ENCODE measurements at regions of chr18 and their contacts with region 1.

Region 1: GRCh38 chr18:74196220-74197119 is 48.1 kb downstream of the TIMM21 start:
- DNase-seq: no peak
- ATAC-seq: peak; percentile 75 to 86

Region 2: GRCh38 chr18:74290794-74291471 is 94.5 kb after region 1 on chr18:
- intact Hi-C with region 1: no loop called
- DNase-seq: no peak
- ATAC-seq: peak; percentile 24 to 45

Region 3: GRCh38 chr18:74476140-74476539 is 279.7 kb after region 1 on chr18:
- intact Hi-C with region 1: loop called in 1 of 2 experiments (anchors 5 kb)
- DNase-seq: peak; percentile 43
- ATAC-seq: peak in 1 of 2 donors; percentile 26

Region 4: GRCh38 chr18:74546751-74547550 is 350.5 kb after region 1 on chr18:
- intact Hi-C with region 1: loop called in 1 of 2 experiments (anchors 5 kb)
- DNase-seq: peak; percentile 63
- ATAC-seq: peak; percentile 47 to 74